Activated CD4-positive, alpha-beta T cell treated with anti-CD3 and anti-CD28 coated beads for 36 hours (primary cell): ENCODE measurements at regions of chr13 and their contacts with region 1.

Region 1: GRCh38 chr13:20525690-20526544 is at the start of gene CRYL1:
- DNase-seq: peak; percentile 81
- ATAC-seq: peak; percentile 86
- H3K4me3 Mint-ChIP-seq: peak within 1 kb of the TSS; percentile 86
- H3K27ac Mint-ChIP-seq: peak within 1 kb of the TSS; percentile 99
- H3K4me1 Mint-ChIP-seq: peaks cover 30% of the 10 kb centered on the region
- H3K27me3 Mint-ChIP-seq: no peaks in the 10 kb centered on the region
- total RNA-seq, gene CRYL1: 8.5 to 9.1 TPM

Region 2: DNA sequence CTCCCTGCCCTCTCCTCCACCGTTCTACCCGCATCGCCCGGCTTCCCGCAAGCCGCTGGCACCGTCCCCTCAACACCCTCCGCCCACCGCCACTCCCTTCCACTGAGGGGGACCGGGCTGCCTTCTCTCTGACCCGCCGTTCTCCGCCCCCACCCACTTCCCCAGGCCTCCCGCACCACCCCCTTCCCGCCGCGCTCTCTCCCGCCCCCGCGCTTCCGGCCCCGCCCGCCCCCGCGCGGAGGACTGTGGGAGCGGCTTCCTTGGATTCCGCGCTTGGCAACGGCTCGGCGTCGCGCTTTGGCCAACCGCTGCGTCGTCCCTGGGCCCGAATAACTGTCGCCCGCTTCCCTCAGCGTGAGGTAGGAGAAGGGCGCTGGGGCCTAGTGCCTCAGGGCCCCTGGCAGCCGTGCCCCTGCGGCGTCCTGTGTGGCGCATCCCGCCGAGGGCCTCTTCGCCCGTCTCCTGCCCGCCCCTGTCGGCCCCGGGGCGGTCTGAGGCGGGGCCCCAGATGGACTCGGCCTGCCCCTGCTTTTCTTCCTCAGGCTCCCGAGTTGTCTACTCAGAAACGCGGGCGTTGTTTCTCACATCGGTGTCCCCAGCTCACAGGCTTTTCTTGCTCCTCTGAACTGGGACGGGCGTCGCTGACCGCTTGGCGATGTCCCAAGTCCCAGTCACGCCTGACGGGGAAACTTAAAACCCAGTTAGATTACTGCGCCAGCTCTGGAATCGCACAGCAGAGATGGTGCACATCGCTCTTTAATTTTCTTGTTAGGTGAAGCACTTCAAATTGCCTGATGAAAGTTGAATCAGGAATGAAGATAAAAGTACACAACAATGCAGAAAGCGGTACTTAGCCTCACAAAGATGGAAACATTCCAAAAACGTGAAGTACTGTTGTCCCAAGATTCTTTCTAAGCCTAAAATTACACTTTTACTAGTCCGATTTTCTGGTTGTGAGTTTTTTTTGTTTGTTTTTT is 41.3 kb after region 1 on chr13 and contains the start of gene IFT88:
- CTCF ChIA-PET with region 1: no interaction called
- POLR2A ChIA-PET with region 1: no interaction called
- intact Hi-C with region 1: loop called (anchors 1 to 2 kb)
- DNase-seq: peak; percentile 89
- ATAC-seq: peak; percentile 83
- H3K4me3 Mint-ChIP-seq: peak within 1 kb of the TSS; percentile 81
- H3K27ac Mint-ChIP-seq: peak within 1 kb of the TSS; percentile 80
- H3K4me1 Mint-ChIP-seq: peaks cover 19% of the 10 kb centered on the region
- H3K27me3 Mint-ChIP-seq: no peaks in the 10 kb centered on the region
- total RNA-seq, gene IFT88: 4.7 to 4.8 TPM

Region 3: DNA sequence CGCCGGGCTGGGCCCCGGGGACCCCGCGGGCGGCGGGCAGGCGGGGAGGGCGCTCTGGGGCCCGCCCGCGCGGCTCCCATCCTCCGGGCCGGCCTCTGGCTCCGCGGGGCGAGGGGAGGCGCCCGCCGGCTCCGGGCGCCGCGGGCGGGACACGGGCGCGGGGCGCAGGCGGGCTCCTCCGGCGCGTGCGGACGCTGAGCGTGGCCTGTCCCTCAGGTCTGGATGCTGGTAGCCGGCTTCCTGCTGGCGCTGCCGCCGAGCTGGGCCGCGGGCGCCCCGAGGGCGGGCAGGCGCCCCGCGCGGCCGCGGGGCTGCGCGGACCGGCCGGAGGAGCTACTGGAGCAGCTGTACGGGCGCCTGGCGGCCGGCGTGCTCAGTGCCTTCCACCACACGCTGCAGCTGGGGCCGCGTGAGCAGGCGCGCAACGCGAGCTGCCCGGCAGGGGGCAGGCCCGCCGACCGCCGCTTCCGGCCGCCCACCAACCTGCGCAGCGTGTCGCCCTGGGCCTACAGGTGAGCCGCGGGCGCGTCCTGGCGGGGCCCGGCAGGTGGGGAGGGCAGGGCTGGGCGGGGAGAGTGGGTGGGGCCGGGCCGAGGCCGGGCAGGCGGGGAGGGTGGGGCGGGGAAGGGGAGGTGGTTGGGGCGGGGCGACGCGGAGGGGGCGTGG is 178.0 kb after region 1 on chr13:
- CTCF ChIA-PET with region 1: interaction called, 4 read pairs
- POLR2A ChIA-PET with region 1: no interaction called
- intact Hi-C with region 1: loop called in 1 of 2 experiments (anchors 1 kb)
- DNase-seq: peak; percentile 87
- ATAC-seq: peak; percentile 89
- H3K4me3 Mint-ChIP-seq: peak overlapping the region; percentile 58
- H3K27ac Mint-ChIP-seq: no peak overlapping the region
- H3K4me1 Mint-ChIP-seq: peaks cover 13% of the 10 kb centered on the region
- H3K27me3 Mint-ChIP-seq: peaks cover 21% of the 10 kb centered on the region

Region 4: GRCh38 chr13:20740021-20740420 is 214.1 kb after region 1 on chr13:
- CTCF ChIA-PET with region 1: no interaction called
- POLR2A ChIA-PET with region 1: no interaction called
- intact Hi-C with region 1: no loop called
- DNase-seq: no peak
- ATAC-seq: no peak
- H3K4me3 Mint-ChIP-seq: no peak overlapping the region
- H3K27ac Mint-ChIP-seq: no peak overlapping the region
- H3K4me1 Mint-ChIP-seq: no peaks in the 10 kb centered on the region
- H3K27me3 Mint-ChIP-seq: no peaks in the 10 kb centered on the region

Region 5: DNA sequence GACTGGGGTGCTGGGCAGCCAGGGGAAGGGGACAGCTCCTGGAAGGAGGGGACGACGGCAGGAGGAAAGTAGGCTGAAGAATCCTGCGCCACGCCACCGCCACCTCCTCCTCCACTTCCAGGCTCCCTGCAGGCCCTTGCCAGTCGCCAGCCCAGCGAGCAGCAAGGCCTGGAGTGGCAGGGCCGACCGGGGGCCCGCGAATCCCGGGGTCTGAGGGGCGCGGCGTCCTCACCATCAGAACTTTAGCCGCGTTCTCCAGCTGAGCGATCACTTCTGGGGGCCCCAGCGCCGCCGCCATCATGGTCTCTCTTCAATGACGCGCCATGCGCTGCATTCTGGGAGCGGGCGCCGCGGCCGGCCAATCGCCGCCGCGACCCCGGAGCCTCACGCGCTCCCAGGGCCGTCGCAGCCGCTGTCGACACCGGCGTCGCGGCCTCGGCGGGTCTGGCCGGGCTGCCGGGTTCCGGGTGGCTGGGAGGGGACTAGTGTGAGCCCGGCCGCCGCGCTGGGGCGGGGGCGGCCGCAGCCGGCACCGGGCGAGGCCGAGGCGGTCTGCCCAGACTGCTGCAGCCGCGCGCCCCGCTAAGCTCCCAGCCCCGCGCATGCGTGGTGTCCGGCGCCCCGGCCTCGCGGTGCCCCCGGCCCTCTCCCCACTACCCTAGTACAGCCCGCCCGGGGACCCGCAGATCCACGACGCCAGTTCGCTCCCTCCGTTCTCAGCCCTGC is 376.7 kb after region 1 on chr13 and contains the start of gene XPO4:
- CTCF ChIA-PET with region 1: no interaction called
- POLR2A ChIA-PET with region 1: no interaction called
- intact Hi-C with region 1: loop called (anchors 1 to 10 kb)
- DNase-seq: peak; percentile 91
- ATAC-seq: peak; percentile 94
- H3K4me3 Mint-ChIP-seq: peak within 1 kb of the TSS; percentile 91
- H3K27ac Mint-ChIP-seq: peak within 1 kb of the TSS; percentile 92
- H3K4me1 Mint-ChIP-seq: peaks cover 32% of the 10 kb centered on the region
- H3K27me3 Mint-ChIP-seq: no peaks in the 10 kb centered on the region
- total RNA-seq, gene XPO4: 22.8 to 26.4 TPM

Region 6: GRCh38 chr13:21476893-21477472 is 951.1 kb after region 1 on chr13:
- CTCF ChIA-PET with region 1: no interaction called
- POLR2A ChIA-PET with region 1: no interaction called
- intact Hi-C with region 1: loop called in 1 of 2 experiments (anchors 10 kb)
- DNase-seq: peak; percentile 91
- ATAC-seq: peak; percentile 96
- H3K4me3 Mint-ChIP-seq: peak overlapping the region; percentile 78
- H3K27ac Mint-ChIP-seq: peak overlapping the region; percentile 52
- H3K4me1 Mint-ChIP-seq: peaks cover 8% of the 10 kb centered on the region
- H3K27me3 Mint-ChIP-seq: no peaks in the 10 kb centered on the region

Region 7: GRCh38 chr13:21670883-21671619 is 1145.1 kb after region 1 on chr13 and contains the start of gene FGF9:
- CTCF ChIA-PET with region 1: no interaction called
- POLR2A ChIA-PET with region 1: no interaction called
- intact Hi-C with region 1: loop called in 1 of 2 experiments (anchors 10 kb)
- DNase-seq: peak; percentile 88
- ATAC-seq: peak; percentile 78
- H3K4me3 Mint-ChIP-seq: peak within 1 kb of the TSS; percentile 76
- H3K27ac Mint-ChIP-seq: peak within 1 kb of the TSS; percentile 53
- H3K4me1 Mint-ChIP-seq: peaks cover 45% of the 10 kb centered on the region
- H3K27me3 Mint-ChIP-seq: peaks cover 43% of the 10 kb centered on the region
- total RNA-seq, gene FGF9: 0.19 TPM in 1 of 2 experiments, not detected in the other